G401 (cell line): ENCODE measurements at regions of chr3 and their contacts with region 1.

Region 1: DNA sequence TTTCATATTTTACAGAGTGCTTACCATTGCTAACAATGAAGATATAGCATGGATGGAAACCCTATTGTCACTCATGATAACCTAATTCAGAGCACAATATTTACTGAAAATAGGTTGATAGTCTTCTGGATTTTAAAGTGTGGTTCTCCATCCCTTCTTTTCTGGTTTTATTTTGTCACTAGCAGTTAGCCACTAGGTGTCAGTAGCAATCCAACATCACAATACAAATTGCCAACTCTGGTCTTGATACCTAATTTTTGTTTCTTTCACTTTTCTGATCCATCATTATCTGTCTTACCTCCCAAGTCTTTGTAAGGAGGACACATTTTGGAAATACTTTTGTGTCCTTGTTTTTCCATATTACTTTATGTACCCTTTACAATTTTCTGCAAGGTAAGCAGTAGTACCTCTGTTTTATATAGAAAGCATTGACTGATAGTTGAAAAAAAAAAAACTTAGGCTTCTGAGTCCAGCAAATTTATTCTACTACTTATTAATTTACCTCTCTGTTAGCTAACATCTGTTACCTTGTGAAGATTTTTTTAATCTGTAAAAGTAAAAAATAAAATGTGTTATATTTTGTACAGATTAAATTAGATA is 28.3 kb upstream of the CRYBG3 start:
- DNase-seq: peak; percentile 60

Region 2: GRCh38 chr3:97559388-97559787 is 234.1 kb before region 1 on chr3:
- in situ Hi-C with region 1: no loop called
- DNase-seq: no peak

Region 3: GRCh38 chr3:97848779-97849178 is 55.3 kb after region 1 on chr3:
- in situ Hi-C with region 1: no loop called
- DNase-seq: no peak

Region 4: GRCh38 chr3:98022978-98023820 is 229.7 kb after region 1 on chr3:
- in situ Hi-C with region 1: loop called (anchors 25 kb)
- DNase-seq: peak; percentile 83